Activated B cell treated with CpG ODN at 0.5 μM for 24 hours (primary cell): ENCODE measurements at regions of chr20 and their contacts with region 1.

Region 1: GRCh38 chr20:33999025-33999649 is 5.4 kb downstream of the RALY start:
- DNase-seq: no peak
- ATAC-seq: no peak
- H3K4me3 Mint-ChIP-seq: no peak overlapping the region
- H3K27ac Mint-ChIP-seq: peak overlapping the region; percentile 41
- H3K4me1 Mint-ChIP-seq: peaks cover 88% of the 10 kb centered on the region
- H3K27me3 Mint-ChIP-seq: no peaks in the 10 kb centered on the region
- CTCF ChIP-seq: no peak

Region 2: DNA sequence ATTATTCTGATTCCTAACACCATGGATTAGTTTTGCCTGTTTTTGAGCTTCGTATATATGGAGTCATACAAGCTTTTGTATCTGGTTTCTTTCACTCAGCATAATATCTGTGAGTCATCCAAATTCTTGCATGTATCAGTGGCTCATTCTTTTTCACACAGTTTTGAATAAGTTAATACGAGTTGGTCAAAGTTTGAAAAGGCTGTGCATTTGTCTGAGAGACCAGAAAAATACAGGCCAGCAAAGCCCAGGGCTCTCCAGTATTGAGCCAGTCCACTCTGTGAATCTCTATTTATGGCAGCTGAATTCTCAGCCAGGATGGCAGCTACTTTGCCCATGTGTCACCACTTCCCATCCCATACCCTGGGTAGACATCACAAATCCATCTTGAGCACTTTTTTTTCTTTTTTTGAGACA is 195.2 kb before region 1 on chr20:
- CTCF ChIA-PET with region 1: no interaction called
- POLR2A ChIA-PET with region 1: no interaction called
- intact Hi-C with region 1: no loop called
- DNase-seq: no peak
- ATAC-seq: no peak
- H3K4me3 Mint-ChIP-seq: no peak overlapping the region
- H3K27ac Mint-ChIP-seq: no peak overlapping the region
- H3K4me1 Mint-ChIP-seq: no peaks in the 10 kb centered on the region
- H3K27me3 Mint-ChIP-seq: no peaks in the 10 kb centered on the region
- CTCF ChIP-seq: no peak

Region 3: DNA sequence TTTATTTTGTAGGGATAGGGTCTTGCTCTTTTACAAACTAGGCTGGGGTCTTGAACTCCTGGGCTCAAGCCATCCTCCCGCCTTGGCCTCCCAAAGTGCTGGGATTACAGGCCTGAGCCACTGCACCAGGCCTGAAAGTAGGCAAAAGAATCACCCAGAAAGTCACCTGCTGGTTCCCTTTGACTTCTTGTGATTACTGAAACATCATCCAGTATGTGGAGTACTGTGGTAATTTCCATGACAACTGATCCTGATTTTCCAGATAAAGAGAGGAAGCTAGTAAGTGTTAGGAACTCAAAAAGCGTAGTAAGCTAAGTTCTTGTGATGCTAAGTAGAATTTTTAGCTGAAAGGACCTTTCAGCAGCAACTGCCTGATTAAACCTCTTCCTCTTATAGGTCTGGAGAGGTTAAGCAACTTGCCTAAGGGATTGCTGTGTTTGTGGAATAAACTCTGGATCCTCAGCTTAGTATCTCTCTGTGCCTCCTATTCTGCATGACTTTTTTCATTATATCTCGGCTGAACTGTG is 11.3 kb after region 1 on chr20:
- CTCF ChIA-PET with region 1: no interaction called
- POLR2A ChIA-PET with region 1: no interaction called
- intact Hi-C with region 1: no loop called
- DNase-seq: no peak
- ATAC-seq: no peak
- H3K4me3 Mint-ChIP-seq: no peak overlapping the region
- H3K27ac Mint-ChIP-seq: no peak overlapping the region
- H3K4me1 Mint-ChIP-seq: peaks cover 79% of the 10 kb centered on the region
- H3K27me3 Mint-ChIP-seq: no peaks in the 10 kb centered on the region
- CTCF ChIP-seq: no peak

Region 4: DNA sequence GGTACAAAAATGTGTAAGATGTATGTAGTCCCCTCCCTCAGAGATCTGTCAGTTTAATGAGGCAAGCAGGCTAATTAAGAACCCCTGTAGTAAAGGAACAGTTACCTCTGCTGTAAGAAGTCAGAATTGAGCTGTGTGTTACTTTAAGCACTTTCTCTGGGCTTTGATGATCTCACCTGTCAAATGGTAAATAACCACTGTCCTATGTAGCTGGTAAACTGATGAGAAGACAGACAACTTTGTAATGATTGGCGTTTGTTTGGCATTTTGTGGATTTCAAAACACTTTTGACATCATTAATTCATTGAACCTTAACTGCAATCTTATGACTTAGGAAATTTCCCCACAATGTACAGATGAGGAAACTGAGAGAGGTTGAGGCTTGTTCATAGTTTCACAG is 50.3 kb after region 1 on chr20:
- CTCF ChIA-PET with region 1: no interaction called
- POLR2A ChIA-PET with region 1: interaction called, 10 read pairs
- intact Hi-C with region 1: no loop called
- DNase-seq: no peak
- ATAC-seq: no peak
- H3K4me3 Mint-ChIP-seq: no peak overlapping the region
- H3K27ac Mint-ChIP-seq: peak overlapping the region; percentile 5
- H3K4me1 Mint-ChIP-seq: peaks cover 58% of the 10 kb centered on the region
- H3K27me3 Mint-ChIP-seq: no peaks in the 10 kb centered on the region
- CTCF ChIP-seq: no peak